PC-9 (cell line): ENCODE measurements at regions of chr13 and their contacts with region 1.

Region 1: GRCh38 chr13:45206340-45206739 is 5.5 kb upstream of the KCTD4 start:
- DNase-seq: peak in 1 of 2 experiments; percentile 92
- H3K4me3 ChIP-seq: no peak overlapping the region
- H3K27ac ChIP-seq: peak overlapping the region; percentile 85
- H3K4me1 ChIP-seq: peaks cover 45% of the 10 kb centered on the region
- H3K27me3 ChIP-seq: no peaks in the 10 kb centered on the region
- CTCF ChIP-seq: no peak

Region 2: GRCh38 chr13:45119991-45120864 is 86.1 kb before region 1 on chr13 and contains the start of gene GTF2F2:
- CTCF ChIA-PET with region 1: no interaction called
- POLR2A ChIA-PET with region 1: no interaction called
- intact Hi-C with region 1: loop called (anchors 10 kb)
- DNase-seq: peak; percentile 79 to 89
- H3K4me3 ChIP-seq: peak within 1 kb of the TSS; percentile 96
- H3K27ac ChIP-seq: peak within 1 kb of the TSS; percentile 74
- H3K4me1 ChIP-seq: peaks cover 18% of the 10 kb centered on the region
- H3K27me3 ChIP-seq: no peaks in the 10 kb centered on the region
- CTCF ChIP-seq: no peak
- total RNA-seq, gene GTF2F2: 26.5 and 28.8 TPM in 2 replicates

Region 3: DNA sequence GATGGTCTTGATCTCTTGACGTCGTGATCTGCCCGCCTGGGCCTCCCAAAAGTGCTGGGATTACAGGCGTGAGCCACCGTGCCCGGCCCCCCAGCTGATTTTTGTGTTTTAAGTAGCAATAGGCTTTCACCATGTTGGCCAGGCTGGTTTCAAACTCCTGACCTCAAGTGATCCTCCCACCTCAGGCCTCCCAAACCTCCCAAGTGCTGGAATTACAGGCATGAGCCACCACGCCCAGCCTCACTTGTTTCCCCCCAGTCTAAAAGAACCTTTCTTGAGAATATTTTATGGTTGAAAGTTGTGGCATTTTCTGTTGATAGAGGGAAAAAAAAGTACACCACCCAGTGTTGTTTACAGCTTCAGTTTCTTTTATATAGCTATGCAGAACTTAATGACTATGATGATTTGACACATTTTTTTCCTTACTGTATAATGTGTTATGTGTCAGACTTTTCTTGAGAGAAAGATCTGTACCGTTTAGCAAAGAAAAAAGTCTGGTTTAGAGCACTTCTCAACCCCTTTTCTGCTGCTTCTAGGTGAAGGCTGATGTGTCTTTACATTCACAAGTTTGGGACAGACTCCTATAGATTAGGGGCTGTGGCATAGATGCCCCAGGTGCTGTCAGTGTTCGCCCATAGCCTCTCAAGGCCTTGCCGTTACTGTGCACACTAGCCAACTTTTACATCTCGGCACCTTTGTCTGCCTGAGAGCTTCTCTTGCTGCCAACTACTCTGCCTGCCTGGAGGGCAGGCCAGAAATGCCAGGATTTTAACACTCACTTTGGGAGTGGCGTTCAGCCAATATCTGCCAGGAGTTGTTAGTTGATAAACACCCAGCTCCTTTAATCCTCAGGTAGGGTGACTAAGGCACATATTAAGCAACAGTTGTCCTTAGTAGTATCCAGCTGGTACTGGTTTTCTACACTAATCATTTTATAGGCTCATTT is 38.5 kb before region 1 on chr13:
- CTCF ChIA-PET with region 1: interaction called, 30 read pairs
- POLR2A ChIA-PET with region 1: no interaction called
- intact Hi-C with region 1: no loop called
- DNase-seq: peak; percentile 84 to 98
- H3K4me3 ChIP-seq: peak overlapping the region; percentile 22; the same call in 1 of the 2 replicates
- H3K27ac ChIP-seq: peak overlapping the region; percentile 84
- H3K4me1 ChIP-seq: peaks cover 52% of the 10 kb centered on the region
- H3K27me3 ChIP-seq: no peaks in the 10 kb centered on the region
- CTCF ChIP-seq: no peak

Region 4: GRCh38 chr13:45219938-45220375 is 13.6 kb after region 1 on chr13:
- CTCF ChIA-PET with region 1: no interaction called
- POLR2A ChIA-PET with region 1: interaction called, 4 read pairs
- intact Hi-C with region 1: loop called (anchors 2 kb)
- DNase-seq: peak; percentile 55 to 100
- H3K4me3 ChIP-seq: peak overlapping the region; percentile 20; the same call in 1 of the 2 replicates
- H3K27ac ChIP-seq: peak overlapping the region; percentile 82
- H3K4me1 ChIP-seq: peaks cover 36% of the 10 kb centered on the region
- H3K27me3 ChIP-seq: no peaks in the 10 kb centered on the region
- CTCF ChIP-seq: no peak

Region 5: DNA sequence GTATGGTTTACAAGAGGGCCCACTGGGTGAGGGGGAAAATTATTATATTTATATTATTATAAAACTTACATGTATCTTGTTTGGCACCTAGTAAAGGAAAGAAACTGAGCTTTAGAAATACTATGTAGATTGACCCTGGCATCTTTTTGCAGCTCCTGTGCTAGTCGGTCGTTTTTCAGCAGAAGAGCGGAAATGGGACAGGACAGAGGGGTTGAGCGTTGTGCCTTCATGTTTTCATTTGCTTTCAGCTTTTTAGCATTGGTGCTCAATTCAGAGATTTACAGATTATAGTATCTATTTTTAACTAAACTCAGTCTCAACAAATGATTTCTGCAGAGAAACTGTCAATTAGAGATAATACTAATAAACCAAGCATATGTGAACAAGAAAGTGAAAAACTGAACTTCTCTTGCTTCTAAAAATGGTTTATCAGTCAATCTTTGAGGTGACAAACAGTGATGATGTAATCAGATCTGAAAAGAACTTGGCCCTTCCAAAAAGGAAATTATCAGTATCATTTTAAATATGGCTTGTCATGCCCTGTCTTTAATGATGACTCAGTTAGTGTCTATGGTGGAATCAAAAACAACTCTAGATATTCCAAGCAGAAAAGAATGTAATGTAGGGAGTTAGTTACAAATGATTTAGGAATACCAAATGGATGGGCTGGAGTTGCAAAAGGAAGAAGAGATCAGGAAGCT is 51.4 kb after region 1 on chr13:
- CTCF ChIA-PET with region 1: no interaction called
- POLR2A ChIA-PET with region 1: no interaction called
- intact Hi-C with region 1: loop called (anchors 10 kb)
- DNase-seq: no peak
- H3K4me3 ChIP-seq: no peak overlapping the region
- H3K27ac ChIP-seq: peak overlapping the region; percentile 24; the same call in 1 of the 2 replicates
- H3K4me1 ChIP-seq: peaks cover 46% of the 10 kb centered on the region
- H3K27me3 ChIP-seq: no peaks in the 10 kb centered on the region
- CTCF ChIP-seq: no peak